Left colon (tissue), 2 donors: ENCODE measurements at regions of chr4 and their contacts with region 1.

Region 1: GRCh38 chr4:39527273-39528060 is at the start of gene UGDH:
- DNase-seq: peak; percentile 97 to 98
- ATAC-seq: peak; percentile 88
- total RNA-seq, gene UGDH: 208 to 303 TPM

Region 2: DNA sequence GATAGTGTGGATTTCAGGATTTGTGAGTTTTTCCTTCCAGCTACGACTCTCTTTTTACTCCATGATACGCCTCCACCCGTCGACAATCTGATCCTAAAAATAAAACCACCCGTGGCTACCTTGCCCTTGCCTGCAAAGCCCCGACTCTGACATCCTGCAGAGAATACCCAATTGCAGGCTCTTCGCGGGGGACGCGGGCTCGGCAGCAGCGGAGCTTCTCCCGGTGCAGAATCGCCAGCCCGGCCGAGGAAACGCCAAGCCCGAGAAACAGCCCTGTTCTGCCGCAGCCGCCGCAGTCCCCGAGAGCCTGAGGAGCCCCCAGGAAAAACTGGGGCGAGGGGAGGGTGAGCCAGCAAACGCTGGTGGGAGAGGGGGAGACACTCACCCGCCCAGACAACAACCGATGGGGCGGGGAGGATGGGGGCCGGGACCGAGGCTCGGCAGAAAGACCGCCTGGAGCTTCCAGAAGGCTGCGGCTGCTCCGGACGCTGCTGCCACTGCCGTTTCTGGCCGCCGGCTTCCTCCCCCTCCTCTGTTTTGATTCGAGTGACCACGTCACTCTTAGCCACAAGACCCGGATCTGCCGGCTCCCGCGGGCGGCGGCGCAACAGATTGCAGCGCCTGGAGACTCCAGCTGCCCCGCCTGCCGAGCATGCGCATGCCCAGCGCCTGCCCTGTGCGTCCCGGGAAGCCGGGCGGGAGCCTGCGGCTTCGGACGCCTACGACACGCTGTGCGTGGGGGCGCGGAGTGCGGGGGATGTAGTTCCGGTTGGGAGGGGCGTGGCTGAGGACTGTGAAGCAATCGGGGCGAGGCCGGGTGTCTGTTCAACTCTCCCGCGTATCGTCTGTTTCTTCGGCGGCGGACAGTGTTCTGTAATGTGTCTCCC is 111.1 kb after region 1 on chr4 and contains the start of gene SMIM14:
- intact Hi-C with region 1: loop called in 1 of 2 experiments (anchors 5 kb)
- DNase-seq: peak; percentile 98 to 99
- ATAC-seq: peak; percentile 92
- total RNA-seq, gene SMIM14: 119 to 146 TPM

Region 3: GRCh38 chr4:39889226-39889625 is 361.8 kb after region 1 on chr4:
- intact Hi-C with region 1: no loop called
- DNase-seq: no peak
- ATAC-seq: no peak